ENCODE measurements at regions of chr12 and their contacts with region 1.

Region 1: DNA sequence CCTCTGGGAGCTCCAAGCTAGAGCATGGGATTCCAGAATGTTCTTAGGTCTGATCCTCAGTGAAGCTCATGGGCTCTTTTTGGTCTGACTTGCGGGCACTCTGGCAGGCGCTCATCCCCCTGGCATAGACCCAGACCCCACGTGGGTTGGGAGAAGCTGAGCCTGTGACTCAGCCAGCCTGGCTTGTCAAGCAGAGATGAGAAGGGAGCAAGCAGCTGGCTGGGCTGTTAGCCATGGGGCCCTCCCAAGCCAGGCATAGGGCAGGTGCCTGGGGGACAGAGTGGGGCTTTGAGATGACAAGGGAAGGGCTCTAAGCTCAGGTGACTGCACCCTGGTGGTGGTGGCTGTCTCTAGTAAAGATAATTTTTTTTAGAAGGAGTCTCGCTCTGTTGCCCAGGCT is 80.3 kb upstream of the NOS1 start:
- DNase-seq: peak; percentile 60 to 75
- ATAC-seq: peak; percentile 62 to 91 (median 81)
- H3K4me3 ChIP-seq: no peak overlapping the region
- H3K27ac ChIP-seq: no peak overlapping the region
- H3K4me1 ChIP-seq: peaks cover 0 to 5% (median 0%) of the 10 kb centered on the region in 9 donors
- H3K27me3 ChIP-seq: peaks cover 0 to 7% (median 0%) of the 10 kb centered on the region in 7 donors
- CTCF ChIP-seq: no peak

Region 2: GRCh38 chr12:117521346-117521745 is 79.6 kb after region 1 on chr12:
- intact Hi-C with region 1: loop called in 1 of 10 experiments (anchors 10 kb)
- DNase-seq: no peak
- ATAC-seq: no peak
- H3K4me3 ChIP-seq: no peak overlapping the region
- H3K27ac ChIP-seq: no peak overlapping the region
- H3K4me1 ChIP-seq: peaks cover 0 to 17% (median 0%) of the 10 kb centered on the region in 9 donors
- H3K27me3 ChIP-seq: peaks cover 0 to 6% (median 0%) of the 10 kb centered on the region in 7 donors
- CTCF ChIP-seq: no peak

Region 3: GRCh38 chr12:117732761-117733160 is 291.0 kb after region 1 on chr12:
- intact Hi-C with region 1: no loop called
- DNase-seq: no peak
- ATAC-seq: no peak
- H3K4me3 ChIP-seq: no peak overlapping the region
- H3K27ac ChIP-seq: no peak overlapping the region
- H3K4me1 ChIP-seq: no peaks in the 10 kb centered on the region
- H3K27me3 ChIP-seq: no peaks in the 10 kb centered on the region
- CTCF ChIP-seq: no peak

Measured in heart right ventricle (tissue), 16 donors.